Body of pancreas (tissue), 4 donors: ENCODE measurements at regions of chr17 and their contacts with region 1.

Region 1: DNA sequence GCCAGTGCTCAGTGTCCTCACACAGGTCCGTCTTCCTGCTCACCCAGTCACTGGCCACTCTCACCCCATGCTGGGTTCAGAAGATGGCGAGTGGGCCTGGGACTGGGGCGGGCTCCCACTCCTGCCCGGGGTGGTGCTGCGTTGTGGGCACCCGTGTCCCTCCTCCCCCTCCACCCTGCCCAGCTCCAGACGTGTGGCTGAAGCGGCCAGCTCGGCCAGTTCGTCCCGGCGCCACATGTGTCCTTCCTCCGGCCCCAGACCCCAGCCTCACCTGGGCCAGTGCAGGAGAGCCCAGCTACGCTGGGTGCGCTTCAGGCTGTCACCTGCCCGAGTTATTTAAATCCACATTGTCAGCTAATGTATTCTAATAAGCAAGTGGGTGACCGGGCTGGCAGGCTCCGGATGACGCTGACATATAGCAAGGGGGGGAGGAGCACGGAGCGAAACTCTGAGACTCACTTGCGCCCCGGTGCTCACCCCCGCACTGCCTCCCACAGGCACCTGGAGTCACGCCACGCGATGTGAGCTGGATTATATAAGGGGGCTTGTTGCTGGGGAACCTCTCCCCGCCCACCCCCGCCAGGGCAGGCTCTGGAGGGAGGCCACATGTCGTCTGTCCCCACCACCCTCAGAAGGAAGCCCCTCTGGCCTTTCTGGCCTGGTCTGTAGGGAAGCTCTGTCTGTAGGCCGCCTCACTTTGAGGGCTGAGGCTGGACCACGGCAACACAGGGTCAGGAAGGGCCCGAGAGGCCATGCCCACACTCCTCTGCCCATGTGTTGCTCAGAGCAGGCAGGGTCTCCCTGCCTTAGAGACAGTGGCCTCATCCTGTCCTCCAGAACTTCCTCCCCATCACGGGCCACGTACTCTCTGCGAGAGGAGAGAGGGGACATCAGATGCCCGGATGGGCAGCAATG is 7.1 kb upstream of the BAIAP2 start:
- DNase-seq: peak in 1 of 4 donors; percentile 38
- ATAC-seq: no peak
- H3K4me3 ChIP-seq: no peak overlapping the region
- H3K27ac ChIP-seq: no peak overlapping the region
- H3K4me1 ChIP-seq: peaks cover 44% of the 10 kb centered on the region
- H3K27me3 ChIP-seq: peaks cover 0 to 14% of the 10 kb centered on the region in 2 donors
- CTCF ChIP-seq: no peak
- POLR2A ChIP-seq: no peak

Region 2: DNA sequence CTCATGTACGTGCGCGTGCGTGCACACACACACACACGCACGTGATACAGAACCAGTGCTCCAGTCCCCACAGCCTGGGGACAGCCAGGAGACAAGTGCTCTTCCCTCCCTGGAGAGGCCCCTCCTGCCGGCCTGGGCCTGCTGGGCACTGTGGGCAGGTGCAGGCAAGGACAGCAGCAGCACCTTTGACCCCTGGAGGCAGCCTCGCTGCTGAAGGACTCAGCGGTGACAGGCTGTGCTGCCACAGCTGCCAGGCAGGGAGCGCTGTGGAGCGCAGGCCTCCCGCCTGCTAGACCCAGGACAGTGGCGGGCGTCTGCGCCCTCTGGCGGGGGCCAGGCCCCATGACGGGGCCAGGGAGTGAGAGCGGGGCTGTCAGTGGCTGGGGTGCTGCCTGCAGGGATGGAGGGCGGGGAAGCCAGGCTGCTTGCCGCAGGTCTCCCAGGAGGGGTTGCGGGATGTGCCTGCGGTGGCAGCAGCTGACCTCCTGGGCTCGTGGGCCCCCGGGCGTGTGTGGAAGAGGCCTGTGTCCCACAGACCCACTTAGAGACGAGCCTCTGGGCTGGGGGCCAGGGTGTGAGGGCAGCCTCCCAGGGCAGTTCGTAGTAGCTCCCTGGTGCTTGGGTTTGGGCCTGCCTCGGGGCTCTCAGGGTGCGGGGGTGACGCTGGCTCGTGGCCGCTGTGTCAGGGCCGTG is 73.9 kb after region 1 on chr17:
- intact Hi-C with region 1: loop called (anchors 2 kb)
- DNase-seq: peak; percentile 82 to 88 (median 86)
- ATAC-seq: peak; percentile 94
- H3K4me3 ChIP-seq: no peak overlapping the region
- H3K27ac ChIP-seq: no peak overlapping the region
- H3K4me1 ChIP-seq: peaks cover 16% of the 10 kb centered on the region
- H3K27me3 ChIP-seq: no peaks in the 10 kb centered on the region
- CTCF ChIP-seq: peak; percentile 99 to 100 (median 100)
- POLR2A ChIP-seq: no peak